ENCODE measurements at regions of chr3 and their contacts with region 1.

Region 1: DNA sequence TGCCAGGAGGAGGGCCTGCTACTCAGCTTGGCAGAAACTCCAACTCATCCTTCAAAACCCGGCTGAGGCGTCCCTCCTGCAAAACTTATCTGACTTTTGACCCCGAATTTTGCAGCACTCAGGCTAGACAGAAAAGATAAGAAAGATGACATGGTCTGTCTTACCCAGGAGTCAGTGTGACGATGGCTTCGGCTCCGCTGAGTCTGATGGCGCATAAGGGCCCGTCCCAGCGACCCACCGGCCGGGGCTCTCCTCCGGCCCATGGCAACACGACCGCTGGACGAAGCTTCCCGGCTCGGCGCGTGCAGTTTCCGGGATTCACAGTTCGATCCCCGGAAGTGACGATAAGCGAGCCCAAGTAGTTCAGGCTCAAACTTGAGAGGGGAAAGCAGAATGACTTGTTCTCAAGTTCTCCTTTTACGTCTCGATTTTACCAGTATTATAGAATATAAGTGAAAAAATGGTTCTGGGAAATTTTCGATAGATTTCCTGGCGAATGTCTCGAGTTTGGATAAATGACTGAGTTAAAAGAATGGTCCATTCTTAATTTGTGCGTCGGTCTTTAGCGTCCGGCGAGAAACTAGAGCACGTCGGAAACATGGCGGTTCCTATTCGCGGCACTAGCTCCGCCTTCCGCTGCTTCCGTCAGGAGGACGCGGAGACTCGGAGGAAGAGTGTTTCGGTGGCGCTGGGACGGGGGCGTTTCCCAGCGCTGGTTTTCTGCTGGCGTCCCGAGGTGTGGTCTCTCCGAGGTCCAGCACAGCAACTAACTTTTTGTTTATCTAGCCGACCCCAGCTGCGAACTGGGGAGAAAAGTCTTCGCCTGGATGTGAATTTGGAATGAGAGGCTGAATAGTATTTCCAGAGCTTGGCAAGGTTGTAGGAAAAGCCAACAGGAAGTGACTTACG is at the start of gene LSG1:
- DNase-seq: peak; percentile 80
- ATAC-seq: peak; percentile 94
- H3K4me3 Mint-ChIP-seq: peak within 1 kb of the TSS; percentile 99
- H3K27ac Mint-ChIP-seq: peak within 1 kb of the TSS; percentile 99
- H3K4me1 Mint-ChIP-seq: peaks cover 22% of the 10 kb centered on the region
- H3K27me3 Mint-ChIP-seq: peaks cover 6% of the 10 kb centered on the region
- CTCF ChIP-seq: no peak
- total RNA-seq, gene LSG1: 55.1 and 55.4 TPM in 2 replicates

Region 2: GRCh38 chr3:194632809-194633348 is 39.3 kb before region 1 on chr3:
- CTCF ChIA-PET with region 1: interaction called, 3 read pairs
- POLR2A ChIA-PET with region 1: interaction called, 3 read pairs
- intact Hi-C with region 1: loop called (anchors 1 kb)
- DNase-seq: no peak
- ATAC-seq: peak; percentile 64
- H3K4me3 Mint-ChIP-seq: peak overlapping the region; percentile 81
- H3K27ac Mint-ChIP-seq: no peak overlapping the region
- H3K4me1 Mint-ChIP-seq: peaks cover 11% of the 10 kb centered on the region
- H3K27me3 Mint-ChIP-seq: no peaks in the 10 kb centered on the region
- CTCF ChIP-seq: no peak

Region 3: GRCh38 chr3:194952841-194953241 is 280.7 kb after region 1 on chr3:
- CTCF ChIA-PET with region 1: interaction called, 3 read pairs
- POLR2A ChIA-PET with region 1: no interaction called
- intact Hi-C with region 1: loop called (anchors 1 kb)
- DNase-seq: no peak
- ATAC-seq: no peak
- H3K4me3 Mint-ChIP-seq: no peak overlapping the region
- H3K27ac Mint-ChIP-seq: no peak overlapping the region
- H3K4me1 Mint-ChIP-seq: no peaks in the 10 kb centered on the region
- H3K27me3 Mint-ChIP-seq: no peaks in the 10 kb centered on the region
- CTCF ChIP-seq: no peak

Region 4: GRCh38 chr3:195059006-195059350 is 386.8 kb after region 1 on chr3:
- CTCF ChIA-PET with region 1: no interaction called
- POLR2A ChIA-PET with region 1: no interaction called
- intact Hi-C with region 1: no loop called
- DNase-seq: no peak
- ATAC-seq: no peak
- H3K4me3 Mint-ChIP-seq: no peak overlapping the region
- H3K27ac Mint-ChIP-seq: no peak overlapping the region
- H3K4me1 Mint-ChIP-seq: peaks cover 8% of the 10 kb centered on the region
- H3K27me3 Mint-ChIP-seq: peaks cover 3% of the 10 kb centered on the region
- CTCF ChIP-seq: no peak

Region 5: GRCh38 chr3:195259475-195260279 is 587.5 kb after region 1 on chr3:
- CTCF ChIA-PET with region 1: interaction called, 24 read pairs
- POLR2A ChIA-PET with region 1: interaction called, 5 read pairs
- intact Hi-C with region 1: loop called (anchors 1 kb)
- DNase-seq: peak; percentile 95
- ATAC-seq: peak; percentile 91
- H3K4me3 Mint-ChIP-seq: peak overlapping the region; percentile 74
- H3K27ac Mint-ChIP-seq: peak overlapping the region; percentile 81
- H3K4me1 Mint-ChIP-seq: peaks cover 13% of the 10 kb centered on the region
- H3K27me3 Mint-ChIP-seq: no peaks in the 10 kb centered on the region
- CTCF ChIP-seq: no peak

Region 6: DNA sequence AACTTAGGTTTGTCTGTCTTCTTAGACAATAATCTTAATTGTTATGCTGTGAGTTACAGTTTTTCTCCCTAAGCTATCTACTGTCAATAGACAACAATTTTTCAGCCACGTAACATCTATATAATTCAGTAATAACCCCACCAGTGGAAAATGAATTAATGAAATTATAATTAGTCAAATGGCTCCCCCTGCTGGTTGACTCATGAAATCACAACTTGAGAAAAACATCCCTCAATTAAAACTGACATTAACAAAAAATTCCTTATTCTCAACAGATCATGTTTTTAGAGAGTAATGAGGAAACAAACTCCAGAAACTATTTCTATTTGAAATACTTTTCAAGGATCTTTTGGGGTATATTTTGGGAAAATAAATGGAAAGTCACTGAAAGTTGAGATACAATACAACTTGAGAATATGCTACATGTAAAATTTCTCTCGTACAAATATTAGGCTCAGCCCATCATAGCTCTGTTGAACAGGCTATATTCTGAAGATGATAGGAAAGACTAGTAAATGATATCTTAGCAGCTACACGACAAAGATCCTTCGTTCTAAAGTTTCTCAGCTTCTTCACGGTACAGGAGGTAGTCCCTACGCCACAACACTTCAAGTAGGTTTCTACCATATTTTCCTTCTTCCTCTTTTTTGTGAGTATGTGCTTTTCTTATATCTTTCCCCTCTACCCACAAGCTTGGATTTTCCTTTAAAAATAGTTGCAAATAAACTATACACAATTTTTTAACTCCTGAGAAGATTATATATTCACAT is 850.3 kb after region 1 on chr3:
- CTCF ChIA-PET with region 1: interaction called, 6 read pairs
- POLR2A ChIA-PET with region 1: no interaction called
- intact Hi-C with region 1: loop called (anchors 2 kb)
- DNase-seq: no peak
- ATAC-seq: peak; percentile 10
- H3K4me3 Mint-ChIP-seq: no peak overlapping the region
- H3K27ac Mint-ChIP-seq: peak overlapping the region; percentile 22
- H3K4me1 Mint-ChIP-seq: peaks cover 13% of the 10 kb centered on the region
- H3K27me3 Mint-ChIP-seq: no peaks in the 10 kb centered on the region
- CTCF ChIP-seq: peak; percentile 85